ENCODE measurements at regions of chr19 and their contacts with region 1.

Region 1: DNA sequence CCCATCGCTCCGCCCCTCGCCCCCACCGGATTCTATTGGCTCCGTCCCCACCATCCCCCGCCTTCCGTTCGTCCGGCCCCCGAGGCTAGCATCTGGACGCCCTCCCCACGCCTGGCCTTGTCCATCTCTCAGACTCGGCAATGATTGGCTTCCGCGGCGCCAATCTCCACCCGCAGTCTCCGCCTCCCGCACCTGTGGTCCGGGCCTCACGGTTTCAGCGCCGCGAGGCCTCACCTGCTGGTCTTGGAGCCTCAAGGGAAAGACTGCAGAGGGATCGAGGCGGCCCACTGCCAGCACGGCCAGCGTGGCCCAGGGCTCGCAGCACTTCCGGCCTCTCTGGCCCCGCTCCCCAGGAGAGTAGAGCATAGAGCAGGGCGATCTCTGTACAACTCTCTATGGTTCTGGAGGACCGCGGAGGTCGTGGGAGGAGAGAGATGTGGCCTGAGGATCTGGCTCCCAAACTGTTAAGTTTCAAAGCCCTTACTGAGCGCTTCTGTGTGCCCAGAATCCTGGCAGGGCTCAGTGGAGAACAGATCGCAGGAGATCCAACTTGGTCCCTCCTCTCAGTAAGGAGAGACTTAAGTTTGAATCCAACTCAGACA is at the start of gene ERCC1:
- DNase-seq: peak; percentile 98 to 99 (median 98)
- ATAC-seq: peak; percentile 88
- H3K4me3 ChIP-seq: peak within 1 kb of the TSS; percentile 54
- H3K27ac ChIP-seq: peak within 1 kb of the TSS; percentile 99
- H3K4me1 ChIP-seq: peaks cover 22 to 61% of the 10 kb centered on the region in 2 experiments; a peak in 4 of 5 replicates
- H3K27me3 ChIP-seq: no peaks in the 10 kb centered on the region
- CTCF ChIP-seq: no peak
- EP300 ChIP-seq: peak; percentile 47
- POLR2A ChIP-seq: peak; percentile 96
- RAD21 ChIP-seq: no peak
- polyA plus RNA-seq, gene ERCC1: 9.3 to 17.0 TPM

Region 2: GRCh38 chr19:45478454-45479238 is 55.0 kb after region 1 on chr19:
- CTCF ChIA-PET with region 1: interaction called, 85 read pairs
- POLR2A ChIA-PET with region 1: interaction called, 5 read pairs
- in situ Hi-C with region 1: no loop called
- intact Hi-C with region 1: loop called (anchors 1 kb)
- DNase-seq: peak; percentile 80 to 95 (median 82)
- ATAC-seq: peak; percentile 97
- H3K4me3 ChIP-seq: peak overlapping the region; percentile 45
- H3K27ac ChIP-seq: peak overlapping the region; percentile 98
- H3K4me1 ChIP-seq: peaks cover 5 to 6% of the 10 kb centered on the region in 2 experiments; a peak in 2 of 5 replicates
- H3K27me3 ChIP-seq: no peaks in the 10 kb centered on the region
- CTCF ChIP-seq: peak; percentile 95 to 98 (median 98)
- EP300 ChIP-seq: peak; percentile 59
- POLR2A ChIP-seq: peak; percentile 41; the same call in 1 of the 2 replicates
- RAD21 ChIP-seq: peak; percentile 98 to 99

Measured in K562 (cell line).